Heart right ventricle (tissue), 16 donors: ENCODE measurements at regions of chr12 and their contacts with region 1.

Region 1: GRCh38 chr12:5140190-5140589 is 96.5 kb downstream of the KCNA5 start:
- DNase-seq: no peak
- ATAC-seq: no peak
- H3K4me3 ChIP-seq: no peak overlapping the region
- H3K27ac ChIP-seq: no peak overlapping the region
- H3K4me1 ChIP-seq: no peaks in the 10 kb centered on the region
- H3K27me3 ChIP-seq: peaks cover 0 to 21% (median 10%) of the 10 kb centered on the region in 7 donors
- CTCF ChIP-seq: no peak

Region 2: GRCh38 chr12:3170423-3171194 is 1969.6 kb before region 1 on chr12:
- intact Hi-C with region 1: loop called in 1 of 10 experiments (anchors 10 kb)
- DNase-seq: no peak
- ATAC-seq: no peak
- H3K4me3 ChIP-seq: no peak overlapping the region
- H3K27ac ChIP-seq: no peak overlapping the region
- H3K4me1 ChIP-seq: peaks cover 7 to 46% (median 20%) of the 10 kb centered on the region in 9 donors
- H3K27me3 ChIP-seq: no peaks in the 10 kb centered on the region
- CTCF ChIP-seq: no peak